CD8-positive, alpha-beta T cell (primary cell): ENCODE measurements at regions of chr10 and their contacts with region 1.

Region 1: DNA sequence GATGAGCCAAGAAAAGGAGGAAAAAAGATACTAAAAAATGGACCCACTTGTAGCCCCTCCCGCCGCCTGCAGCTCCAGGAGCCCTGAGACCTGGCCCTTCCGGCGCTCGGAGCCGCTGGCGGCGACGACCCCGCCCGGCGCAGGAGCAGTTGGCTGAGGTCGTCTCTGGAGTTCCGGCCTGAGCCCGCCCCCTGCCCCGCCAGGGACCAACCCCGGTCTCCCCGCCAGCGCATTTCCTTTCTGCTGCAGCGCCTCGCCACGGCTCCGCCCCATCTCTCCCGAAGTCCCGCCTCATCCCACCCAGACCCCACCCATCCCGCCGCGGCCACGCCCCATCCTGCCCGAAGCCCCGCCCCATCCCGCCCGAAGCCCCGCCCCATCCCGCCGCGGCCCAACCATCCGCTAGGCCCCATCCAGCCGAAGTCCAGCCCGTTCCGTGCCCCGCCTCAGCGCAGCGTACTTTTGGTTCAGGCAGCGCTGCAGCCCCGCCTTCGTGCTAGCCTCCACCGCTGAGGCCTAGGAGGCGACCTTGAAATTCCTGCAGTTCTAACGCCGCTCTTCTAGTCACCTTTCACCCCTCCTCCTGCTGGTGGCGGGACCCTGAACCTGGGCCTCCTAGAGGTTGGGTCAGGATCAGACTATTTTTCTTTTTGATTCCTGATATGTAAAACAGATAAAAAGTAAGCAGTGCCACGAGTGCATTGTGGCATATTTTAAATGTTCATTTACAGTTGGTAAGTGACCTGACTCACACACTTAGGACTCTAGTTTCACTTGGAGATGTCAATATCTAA is at the start of gene STN1:
- DNase-seq: peak; percentile 85 to 98 (median 95)
- ATAC-seq: peak; percentile 92
- H3K4me3 ChIP-seq: peak within 1 kb of the TSS; percentile 85 to 86
- H3K4me3 Mint-ChIP-seq: peak within 1 kb of the TSS; percentile 98
- H3K27ac ChIP-seq: peak within 1 kb of the TSS; percentile 79 to 88
- H3K27ac Mint-ChIP-seq: peak within 1 kb of the TSS; percentile 97
- H3K4me1 ChIP-seq: peaks cover 36% of the 10 kb centered on the region
- H3K4me1 Mint-ChIP-seq: peaks cover 40% of the 10 kb centered on the region
- H3K27me3 ChIP-seq: no peaks in the 10 kb centered on the region
- H3K27me3 Mint-ChIP-seq: no peaks in the 10 kb centered on the region
- CTCF ChIP-seq: no peak
- total RNA-seq, gene STN1: 14.2 to 14.8 TPM

Region 2: DNA sequence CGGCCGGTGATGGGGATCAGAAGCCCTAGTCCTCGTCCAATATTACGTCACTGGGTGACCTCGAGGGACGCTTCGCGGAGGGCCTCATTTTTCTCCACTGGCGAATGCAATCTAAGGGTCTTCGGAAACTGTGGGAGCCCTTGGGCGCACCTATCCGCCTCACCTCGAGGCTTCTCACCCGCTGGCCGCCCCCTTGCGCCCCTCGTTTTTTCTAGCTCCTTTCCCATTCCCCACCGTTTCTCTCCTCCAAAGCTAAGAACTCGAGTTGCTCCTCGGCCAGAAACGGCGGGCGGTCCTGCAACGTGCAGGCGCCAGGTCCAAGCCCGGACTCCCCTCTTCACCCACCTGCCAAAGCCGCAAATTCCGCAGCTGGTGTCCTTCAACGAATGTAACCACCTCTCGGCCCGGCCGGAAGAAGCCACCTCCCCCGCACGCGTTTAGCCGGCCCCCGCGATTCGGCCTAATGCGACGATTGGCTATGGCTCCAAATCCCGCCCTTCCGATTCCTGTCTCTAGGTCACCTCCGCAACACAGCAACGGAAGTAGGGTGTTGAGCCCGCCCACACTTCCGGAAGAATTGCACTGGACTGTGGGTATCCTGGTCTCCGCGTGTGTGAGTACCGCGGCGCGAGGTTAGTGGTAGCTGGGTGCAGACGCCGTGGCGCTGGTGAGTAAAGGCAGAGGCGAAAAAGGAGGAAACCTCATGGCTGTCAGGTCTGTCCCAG is 522.0 kb before region 1 on chr10 and contains the starts of genes ATP5MK and PDCD11:
- CTCF ChIA-PET with region 1: no interaction called
- POLR2A ChIA-PET with region 1: no interaction called
- intact Hi-C with region 1: loop called in 1 of 2 experiments (anchors 5 kb)
- DNase-seq: peak; percentile 86 to 97 (median 94)
- ATAC-seq: peak; percentile 97
- H3K4me3 ChIP-seq: peak within 1 kb of the TSS; percentile 88 to 99
- H3K4me3 Mint-ChIP-seq: peak within 1 kb of the TSS; percentile 97
- H3K27ac ChIP-seq: peak within 1 kb of the TSS; percentile 66 to 69
- H3K27ac Mint-ChIP-seq: peak within 1 kb of the TSS; percentile 96
- H3K4me1 ChIP-seq: peaks cover 39% of the 10 kb centered on the region
- H3K4me1 Mint-ChIP-seq: peaks cover 64% of the 10 kb centered on the region
- H3K27me3 ChIP-seq: no peaks in the 10 kb centered on the region
- H3K27me3 Mint-ChIP-seq: no peaks in the 10 kb centered on the region
- CTCF ChIP-seq: no peak
- total RNA-seq, gene ATP5MK: 93.4 to 97.3 TPM
- total RNA-seq, gene PDCD11: 13.7 to 15.0 TPM

Region 3: GRCh38 chr10:103901299-103901698 is 17.0 kb before region 1 on chr10:
- CTCF ChIA-PET with region 1: interaction called, 6 read pairs
- POLR2A ChIA-PET with region 1: interaction called, 4 read pairs
- intact Hi-C with region 1: loop called in 1 of 2 experiments (anchors 2 kb)
- DNase-seq: peak in 3 of 9 experiments; percentile 23 to 52 (median 45)
- ATAC-seq: peak; percentile 78
- H3K4me3 ChIP-seq: peak overlapping the region in 1 of 2 experiments; percentile 3
- H3K4me3 Mint-ChIP-seq: peak overlapping the region; percentile 76
- H3K27ac ChIP-seq: no peak overlapping the region
- H3K27ac Mint-ChIP-seq: peak overlapping the region; percentile 83
- H3K4me1 ChIP-seq: peaks cover 53% of the 10 kb centered on the region
- H3K4me1 Mint-ChIP-seq: peaks cover 50% of the 10 kb centered on the region
- H3K27me3 ChIP-seq: no peaks in the 10 kb centered on the region
- H3K27me3 Mint-ChIP-seq: no peaks in the 10 kb centered on the region
- CTCF ChIP-seq: no peak

Region 4: GRCh38 chr10:104337974-104338735 is 419.9 kb after region 1 on chr10 and contains the start of gene ITPRIP:
- CTCF ChIA-PET with region 1: interaction called, 3 read pairs
- POLR2A ChIA-PET with region 1: no interaction called
- intact Hi-C with region 1: loop called (anchors 5 to 10 kb)
- DNase-seq: peak; percentile 47 to 89 (median 76)
- ATAC-seq: peak; percentile 67
- H3K4me3 ChIP-seq: peak within 1 kb of the TSS; percentile 92 to 98
- H3K4me3 Mint-ChIP-seq: peak within 1 kb of the TSS; percentile 93
- H3K27ac ChIP-seq: peak within 1 kb of the TSS; percentile 92 to 93
- H3K27ac Mint-ChIP-seq: peak within 1 kb of the TSS; percentile 97
- H3K4me1 ChIP-seq: peaks cover 46% of the 10 kb centered on the region
- H3K4me1 Mint-ChIP-seq: peaks cover 54% of the 10 kb centered on the region
- H3K27me3 ChIP-seq: no peaks in the 10 kb centered on the region
- H3K27me3 Mint-ChIP-seq: no peaks in the 10 kb centered on the region
- CTCF ChIP-seq: no peak
- total RNA-seq, gene ITPRIP: 212 to 214 TPM